ENCODE measurements at regions of chr5 and their contacts with region 1.

Region 1: DNA sequence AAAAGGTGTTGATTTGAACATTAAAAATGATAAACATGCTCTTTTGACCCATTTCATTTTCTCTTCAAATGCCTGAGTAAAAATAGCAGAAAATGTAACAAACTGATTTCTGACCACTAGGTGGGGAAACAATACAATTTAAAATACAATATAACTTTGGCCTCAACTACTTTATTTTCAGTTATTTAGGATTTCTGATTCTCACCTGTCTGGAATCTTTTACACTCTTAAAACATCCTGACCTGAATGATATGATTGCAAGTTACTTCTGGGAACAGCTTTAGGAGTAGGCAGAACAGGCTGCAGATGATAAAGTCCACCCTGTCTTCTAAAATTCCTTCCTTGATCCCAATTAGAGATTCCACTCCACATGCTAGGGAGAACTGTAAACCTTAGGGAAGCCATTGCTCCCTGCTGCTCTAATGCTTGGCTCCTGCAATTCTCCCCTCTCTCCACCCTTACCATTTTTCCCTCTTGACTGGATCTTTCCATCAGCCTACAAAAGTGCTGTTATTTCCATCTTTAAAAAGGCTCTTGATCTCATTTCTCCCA is 70.3 kb downstream of the FYB1 start:
- DNase-seq: peak in 1 of 4 experiments; percentile 53
- ATAC-seq: peak; percentile 68
- H3K4me3 ChIP-seq: no peak overlapping the region
- H3K27ac ChIP-seq: no peak overlapping the region
- H3K4me1 ChIP-seq: peaks cover 0 to 9% of the 10 kb centered on the region in 2 experiments; a peak in 3 of 5 replicates
- H3K27me3 ChIP-seq: no peaks in the 10 kb centered on the region
- CTCF ChIP-seq: peak; percentile 41 to 74 (median 45); a peak in 4 of 6 replicates
- EP300 ChIP-seq: no peak
- POLR2A ChIP-seq: no peak
- RAD21 ChIP-seq: peak; percentile 81 to 94

Region 2: GRCh38 chr5:38634708-38635357 is 514.2 kb before region 1 on chr5:
- CTCF ChIA-PET with region 1: no interaction called
- POLR2A ChIA-PET with region 1: no interaction called
- in situ Hi-C with region 1: no loop called
- intact Hi-C with region 1: no loop called
- DNase-seq: no peak
- ATAC-seq: peak; percentile 58
- H3K4me3 ChIP-seq: no peak overlapping the region
- H3K27ac ChIP-seq: no peak overlapping the region
- H3K4me1 ChIP-seq: peaks cover 0 to 3% of the 10 kb centered on the region in 2 experiments; a peak in 1 of 5 replicates
- H3K27me3 ChIP-seq: peaks cover 3 to 5% of the 10 kb centered on the region in 2 experiments; a peak in 2 of 5 replicates
- CTCF ChIP-seq: no peak
- EP300 ChIP-seq: no peak
- POLR2A ChIP-seq: no peak
- RAD21 ChIP-seq: no peak

Region 3: GRCh38 chr5:38994324-38994927 is 154.6 kb before region 1 on chr5:
- CTCF ChIA-PET with region 1: no interaction called
- POLR2A ChIA-PET with region 1: no interaction called
- in situ Hi-C with region 1: no loop called
- intact Hi-C with region 1: loop called (anchors 5 kb)
- DNase-seq: peak; percentile 18 to 70 (median 32)
- ATAC-seq: peak; percentile 93
- H3K4me3 ChIP-seq: no peak overlapping the region
- H3K27ac ChIP-seq: no peak overlapping the region
- H3K4me1 ChIP-seq: no peaks in the 10 kb centered on the region
- H3K27me3 ChIP-seq: no peaks in the 10 kb centered on the region
- CTCF ChIP-seq: peak; percentile 55 to 70 (median 57)
- EP300 ChIP-seq: no peak
- POLR2A ChIP-seq: no peak
- RAD21 ChIP-seq: peak in 1 of 2 experiments; percentile 65; a peak in 2 of 4 replicates

Region 4: DNA sequence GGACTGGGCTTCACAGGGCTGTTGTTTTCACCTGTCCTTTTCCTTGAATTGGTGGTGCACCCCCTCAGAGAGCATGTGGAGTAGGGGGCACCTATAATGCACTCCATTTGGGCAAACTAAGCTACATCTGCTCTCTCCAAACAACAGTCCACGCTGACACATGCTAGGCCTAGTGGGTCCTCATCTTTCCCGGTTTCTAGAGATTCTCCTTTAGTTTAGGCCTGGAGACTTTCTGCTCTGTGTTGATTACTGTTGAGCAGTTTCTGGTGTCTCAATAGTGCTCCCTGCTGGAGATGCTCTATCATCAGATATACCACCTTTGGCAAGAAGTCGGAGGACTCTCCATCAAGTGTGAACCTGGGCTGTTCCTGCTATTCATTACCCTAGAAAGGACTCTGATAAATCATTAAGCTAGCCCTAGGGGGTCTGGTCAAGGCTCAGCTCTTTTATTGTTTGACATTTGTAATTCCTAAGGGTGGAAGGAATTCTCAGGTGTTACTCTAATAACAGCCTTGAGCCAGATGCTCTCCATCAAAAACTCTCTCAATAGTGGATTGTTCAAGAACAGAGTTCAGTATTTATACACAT is 134.3 kb after region 1 on chr5:
- CTCF ChIA-PET with region 1: interaction called, 13 read pairs
- POLR2A ChIA-PET with region 1: no interaction called
- in situ Hi-C with region 1: loop called (anchors 5 kb)
- intact Hi-C with region 1: loop called (anchors 1 kb)
- DNase-seq: peak; percentile 33 to 84 (median 57)
- ATAC-seq: peak; percentile 100
- H3K4me3 ChIP-seq: no peak overlapping the region
- H3K27ac ChIP-seq: no peak overlapping the region
- H3K4me1 ChIP-seq: no peaks in the 10 kb centered on the region; a peak in 1 of 5 replicates
- H3K27me3 ChIP-seq: no peaks in the 10 kb centered on the region
- CTCF ChIP-seq: peak; percentile 78 to 94 (median 80)
- EP300 ChIP-seq: 0 out of 2 replicates have a peak, but pooled peaks have one; percentile 26
- POLR2A ChIP-seq: no peak
- RAD21 ChIP-seq: peak; percentile 98 to 99

Region 5: DNA sequence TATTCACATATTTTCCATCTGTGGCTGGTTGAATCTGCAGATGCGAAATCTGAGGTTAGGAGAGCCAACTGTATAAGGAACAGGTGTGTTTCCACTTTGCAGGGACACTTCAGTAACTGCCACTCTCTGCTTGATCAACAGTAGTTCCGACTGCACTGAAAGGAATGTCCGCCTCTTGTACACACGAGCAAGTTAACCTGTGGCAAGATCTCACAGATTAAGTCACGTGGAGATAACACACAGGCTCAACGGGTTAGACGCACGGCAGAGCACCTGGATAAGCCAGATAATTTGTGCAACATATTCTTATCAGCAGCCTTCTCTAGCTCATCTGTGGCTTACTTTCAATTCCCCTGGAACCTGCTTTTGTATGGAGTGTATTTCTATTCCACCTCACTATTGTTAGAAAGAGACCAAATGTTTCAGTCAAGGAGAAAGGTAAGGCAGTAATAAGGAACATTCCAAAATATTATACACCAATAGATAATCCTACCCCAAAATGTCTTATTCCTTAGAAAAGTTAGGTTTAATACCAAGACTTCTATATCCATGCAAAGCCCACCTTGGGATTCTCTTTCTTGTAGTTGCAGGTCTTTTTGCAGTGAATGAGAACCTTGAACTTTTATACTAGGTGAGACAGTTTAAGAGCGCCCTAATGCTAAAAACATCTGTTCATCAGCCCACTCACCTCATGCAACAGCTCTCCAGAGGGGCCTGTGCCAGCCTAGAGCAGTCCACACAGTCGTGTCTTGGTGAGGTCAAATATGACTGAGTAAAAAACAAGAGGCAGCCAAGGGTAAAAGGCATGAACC is 221.7 kb after region 1 on chr5:
- CTCF ChIA-PET with region 1: no interaction called
- POLR2A ChIA-PET with region 1: no interaction called
- in situ Hi-C with region 1: loop called (anchors 5 kb)
- intact Hi-C with region 1: no loop called
- DNase-seq: no peak
- ATAC-seq: no peak
- H3K4me3 ChIP-seq: no peak overlapping the region
- H3K27ac ChIP-seq: no peak overlapping the region
- H3K4me1 ChIP-seq: 0 out of 5 replicates have a peak, but pooled peaks cover 0 to 3% of the 10 kb centered on the region in 2 experiments
- H3K27me3 ChIP-seq: no peaks in the 10 kb centered on the region
- CTCF ChIP-seq: no peak
- EP300 ChIP-seq: no peak
- POLR2A ChIP-seq: no peak
- RAD21 ChIP-seq: no peak

Region 6: GRCh38 chr5:39475881-39476842 is 327.1 kb after region 1 on chr5:
- CTCF ChIA-PET with region 1: no interaction called
- POLR2A ChIA-PET with region 1: no interaction called
- in situ Hi-C with region 1: no loop called
- intact Hi-C with region 1: no loop called
- DNase-seq: no peak
- ATAC-seq: no peak
- H3K4me3 ChIP-seq: no peak overlapping the region
- H3K27ac ChIP-seq: no peak overlapping the region
- H3K4me1 ChIP-seq: no peaks in the 10 kb centered on the region
- H3K27me3 ChIP-seq: peaks cover 2 to 5% of the 10 kb centered on the region in 2 experiments; a peak in 3 of 5 replicates
- CTCF ChIP-seq: no peak
- EP300 ChIP-seq: no peak
- POLR2A ChIP-seq: no peak
- RAD21 ChIP-seq: no peak

Region 7: DNA sequence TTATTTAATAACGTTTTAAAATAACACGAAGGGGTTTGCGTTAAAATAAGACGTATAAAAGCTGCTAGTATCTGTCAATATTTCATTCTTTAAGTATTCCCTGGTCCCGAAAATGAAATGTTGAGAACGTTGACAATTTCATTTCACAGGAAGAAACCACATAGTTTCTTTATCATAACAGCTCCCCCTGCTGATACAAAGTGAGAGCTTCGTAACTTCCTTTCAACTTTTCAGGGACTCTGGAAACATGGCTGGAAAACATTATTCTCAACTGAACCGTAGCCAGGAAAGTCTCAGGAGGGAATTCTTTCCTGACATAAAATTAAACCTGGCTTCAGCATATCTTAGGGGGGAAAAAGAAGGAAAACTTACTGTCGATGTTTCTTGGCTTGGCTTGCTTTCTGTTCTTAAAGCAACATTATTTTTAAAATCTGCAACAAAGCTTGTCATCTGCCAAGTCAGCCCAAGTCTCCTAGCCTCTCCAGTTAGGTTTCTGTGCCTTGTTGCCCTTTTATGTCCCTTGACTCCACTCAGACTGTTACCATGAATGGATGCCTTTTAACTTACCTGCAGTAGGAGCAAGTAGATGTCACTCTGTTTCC is 398.6 kb after region 1 on chr5:
- CTCF ChIA-PET with region 1: interaction called, 4 read pairs
- POLR2A ChIA-PET with region 1: no interaction called
- in situ Hi-C with region 1: no loop called
- intact Hi-C with region 1: loop called (anchors 5 kb)
- DNase-seq: peak; percentile 32 to 63 (median 46)
- ATAC-seq: peak; percentile 83
- H3K4me3 ChIP-seq: no peak overlapping the region
- H3K27ac ChIP-seq: no peak overlapping the region
- H3K4me1 ChIP-seq: peaks cover 0 to 8% of the 10 kb centered on the region in 2 experiments; a peak in 2 of 5 replicates
- H3K27me3 ChIP-seq: peaks cover 3 to 4% of the 10 kb centered on the region in 2 experiments; a peak in 2 of 5 replicates
- CTCF ChIP-seq: peak; percentile 61 to 90 (median 77); a peak in 5 of 6 replicates
- EP300 ChIP-seq: no peak
- POLR2A ChIP-seq: no peak
- RAD21 ChIP-seq: peak; percentile 97

Region 8: GRCh38 chr5:39570403-39571027 is 421.5 kb after region 1 on chr5:
- CTCF ChIA-PET with region 1: interaction called, 3 read pairs
- POLR2A ChIA-PET with region 1: no interaction called
- in situ Hi-C with region 1: no loop called
- intact Hi-C with region 1: loop called (anchors 10 kb)
- DNase-seq: peak; percentile 20 to 43 (median 24)
- ATAC-seq: 0 out of 3 replicates have a peak, but pooled peaks have one; percentile 45
- H3K4me3 ChIP-seq: no peak overlapping the region
- H3K27ac ChIP-seq: no peak overlapping the region
- H3K4me1 ChIP-seq: no peaks in the 10 kb centered on the region
- H3K27me3 ChIP-seq: no peaks in the 10 kb centered on the region
- CTCF ChIP-seq: peak; percentile 39 to 70 (median 55); a peak in 4 of 6 replicates
- EP300 ChIP-seq: no peak
- POLR2A ChIP-seq: no peak
- RAD21 ChIP-seq: peak; percentile 76 to 81